Aorta (tissue), 5 donors: ENCODE measurements at regions of chr1 and their contacts with region 1.

Region 1: DNA sequence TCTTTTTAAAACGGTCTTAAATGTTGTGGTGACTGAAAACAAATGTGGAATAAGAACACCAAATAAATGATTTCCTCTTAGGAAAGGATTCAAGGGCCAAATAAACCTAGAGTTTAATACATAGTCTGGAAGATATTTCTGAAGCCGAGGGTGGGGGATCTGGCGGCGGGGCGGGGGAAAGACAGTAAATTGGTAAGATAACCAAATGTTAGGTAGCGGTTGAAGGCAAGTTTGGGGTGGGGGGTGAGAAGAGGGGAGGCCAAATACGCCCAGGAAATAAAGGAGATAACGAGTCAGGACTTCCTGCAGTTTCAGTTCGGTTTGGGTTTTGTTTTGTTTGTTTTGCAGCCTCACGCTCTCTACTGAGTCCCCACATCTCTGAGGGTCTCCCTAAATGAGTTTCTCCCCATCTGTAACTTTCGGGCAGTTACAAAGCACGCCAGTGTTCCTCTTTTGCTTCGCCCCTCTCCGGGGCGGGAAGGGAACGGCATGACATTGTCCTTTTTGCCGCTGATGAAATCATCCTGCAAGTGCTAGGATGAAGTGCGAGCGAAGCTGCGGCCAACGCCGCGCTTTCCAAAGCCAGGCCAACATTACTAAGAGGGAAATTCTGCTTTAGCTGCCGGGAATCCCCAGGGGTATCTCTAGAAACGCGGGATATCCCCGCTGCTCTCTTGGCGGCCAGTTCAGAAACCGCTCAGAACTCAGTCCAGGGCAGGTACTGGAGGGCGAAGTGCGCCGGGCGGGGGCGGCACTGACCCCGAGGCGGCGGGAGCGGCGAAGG is 844 bp downstream of the NIBAN1 start:
- DNase-seq: peak; percentile 77 to 82
- ATAC-seq: peak; percentile 59
- H3K4me3 ChIP-seq: peak overlapping the region; percentile 64 to 100
- H3K27ac ChIP-seq: peak overlapping the region; percentile 81 to 96
- H3K4me1 ChIP-seq: peaks cover 7 to 17% of the 10 kb centered on the region in 2 donors
- H3K27me3 ChIP-seq: no peaks in the 10 kb centered on the region

Region 2: GRCh38 chr1:184754476-184755225 is 218.8 kb before region 1 on chr1 and contains the start of gene EDEM3:
- intact Hi-C with region 1: loop called in 1 of 2 experiments (anchors 5 kb)
- DNase-seq: peak; percentile 98 to 99
- ATAC-seq: peak; percentile 99
- H3K4me3 ChIP-seq: peak within 1 kb of the TSS; percentile 78 to 91
- H3K27ac ChIP-seq: peak within 1 kb of the TSS in 1 of 2 donors; percentile 85
- H3K4me1 ChIP-seq: peaks cover 0 to 1% of the 10 kb centered on the region in 2 donors
- H3K27me3 ChIP-seq: no peaks in the 10 kb centered on the region
- total RNA-seq, gene EDEM3: 39.8 to 54.8 TPM

Region 3: DNA sequence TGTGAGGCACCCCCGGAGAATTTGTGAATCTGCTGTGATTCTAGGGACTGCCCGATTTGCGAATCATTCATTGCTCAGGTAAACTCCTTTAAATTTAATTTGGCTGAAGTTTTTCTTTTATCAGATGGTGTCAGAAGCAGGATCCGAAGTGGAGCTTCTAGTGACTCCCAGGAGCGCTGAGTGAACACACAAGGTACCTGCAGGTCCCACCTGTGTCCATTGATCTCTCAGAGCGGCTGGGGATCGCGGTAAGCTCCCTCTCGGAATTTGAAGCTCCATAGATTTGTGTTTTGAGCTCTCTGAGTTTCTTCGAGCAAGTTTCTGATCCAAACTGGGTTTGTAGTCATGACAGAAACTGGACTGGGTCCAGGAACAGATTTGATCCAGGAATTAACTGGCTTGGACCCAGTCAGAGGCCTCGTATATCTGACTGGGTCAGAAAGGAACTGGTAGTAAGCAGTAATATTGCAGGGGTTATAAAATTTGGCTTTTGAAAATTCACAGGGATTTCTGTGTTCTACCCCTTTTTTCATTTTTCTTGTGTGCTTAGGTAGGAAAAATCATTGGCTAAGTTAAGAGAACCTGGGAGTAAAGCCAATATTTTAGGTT is 162.6 kb before region 1 on chr1:
- intact Hi-C with region 1: loop called (anchors 2 kb)
- DNase-seq: no peak
- ATAC-seq: peak; percentile 55
- H3K4me3 ChIP-seq: no peak overlapping the region
- H3K27ac ChIP-seq: peak overlapping the region; percentile 87 to 94
- H3K4me1 ChIP-seq: peaks cover 0 to 5% of the 10 kb centered on the region in 2 donors
- H3K27me3 ChIP-seq: no peaks in the 10 kb centered on the region

Region 4: DNA sequence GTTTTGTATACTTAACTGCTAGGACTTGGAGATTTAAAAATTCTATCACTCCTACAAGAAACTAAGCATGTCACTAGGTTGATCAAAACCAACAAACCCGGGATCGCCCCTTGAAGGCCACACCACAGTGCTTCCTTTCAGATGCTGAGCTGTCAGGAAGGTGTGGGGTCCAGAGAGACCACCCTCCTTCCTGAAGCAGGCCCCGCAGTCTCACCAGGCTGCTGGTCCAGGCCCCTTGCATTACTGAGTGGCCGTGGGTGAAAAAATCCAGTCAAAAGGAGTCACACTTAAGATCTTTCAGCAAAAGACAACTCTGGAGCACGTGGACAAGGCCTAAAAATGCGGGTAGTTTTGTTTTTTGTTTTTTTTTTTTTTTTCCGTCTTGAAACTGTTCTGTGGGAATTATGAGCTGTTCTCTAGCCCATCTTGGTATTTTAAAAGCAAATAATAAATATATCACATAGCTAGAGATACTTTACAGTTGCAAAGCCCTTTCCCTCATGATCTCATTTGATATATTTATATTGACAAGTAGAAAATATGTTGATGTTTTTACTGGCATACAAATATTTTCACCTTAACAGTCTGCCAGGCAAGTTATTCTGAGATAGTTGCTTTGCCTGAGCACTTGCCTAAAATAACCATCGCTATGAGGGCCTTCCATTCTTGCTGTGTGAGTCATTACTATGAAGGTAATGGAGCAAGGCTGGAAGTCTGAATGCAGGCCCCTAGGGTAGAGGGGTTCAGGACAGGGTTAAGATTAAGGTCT is 145.7 kb before region 1 on chr1:
- intact Hi-C with region 1: loop called (anchors 5 kb)
- DNase-seq: no peak
- ATAC-seq: peak; percentile 83
- H3K4me3 ChIP-seq: no peak overlapping the region
- H3K27ac ChIP-seq: peak overlapping the region; percentile 97 to 98
- H3K4me1 ChIP-seq: peaks cover 8 to 12% of the 10 kb centered on the region in 2 donors
- H3K27me3 ChIP-seq: no peaks in the 10 kb centered on the region

Region 5: GRCh38 chr1:184881941-184882913 is 91.2 kb before region 1 on chr1:
- intact Hi-C with region 1: loop called (anchors 5 kb)
- DNase-seq: peak; percentile 78
- ATAC-seq: peak; percentile 88
- H3K4me3 ChIP-seq: no peak overlapping the region
- H3K27ac ChIP-seq: peak overlapping the region; percentile 97 to 99
- H3K4me1 ChIP-seq: peaks cover 6 to 9% of the 10 kb centered on the region in 2 donors
- H3K27me3 ChIP-seq: no peaks in the 10 kb centered on the region

Region 6: DNA sequence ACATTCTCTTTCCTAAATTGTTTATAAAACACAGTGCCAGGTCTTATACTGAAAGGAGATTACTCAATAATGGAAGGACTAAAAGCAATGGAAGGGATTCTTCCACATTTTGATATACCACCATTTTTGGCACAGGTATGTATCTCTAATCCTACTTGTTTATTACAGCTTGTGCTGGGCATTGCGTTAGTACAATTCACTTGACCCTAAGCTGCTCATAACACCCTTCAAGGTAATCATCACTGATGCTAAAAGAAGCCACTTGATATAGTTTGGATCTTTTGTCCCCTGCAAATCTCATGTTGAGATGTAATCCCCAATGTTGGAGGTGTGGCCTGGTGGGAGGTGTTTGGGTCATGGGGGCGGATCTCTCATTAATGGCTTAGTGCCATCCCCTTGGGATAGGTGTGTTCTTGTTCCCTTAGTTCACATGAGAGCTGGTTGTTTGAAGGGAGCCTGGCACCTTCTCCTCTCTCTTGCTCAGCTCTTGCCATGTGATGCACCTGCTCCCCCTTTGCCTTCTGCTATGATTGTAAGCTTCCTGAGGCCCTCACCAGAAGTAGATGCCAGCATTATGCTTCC is 70.3 kb before region 1 on chr1:
- intact Hi-C with region 1: no loop called
- DNase-seq: no peak
- ATAC-seq: no peak
- H3K4me3 ChIP-seq: no peak overlapping the region
- H3K27ac ChIP-seq: peak overlapping the region in 1 of 2 donors; percentile 81
- H3K4me1 ChIP-seq: peaks cover 10 to 25% of the 10 kb centered on the region in 2 donors
- H3K27me3 ChIP-seq: no peaks in the 10 kb centered on the region

Region 7: DNA sequence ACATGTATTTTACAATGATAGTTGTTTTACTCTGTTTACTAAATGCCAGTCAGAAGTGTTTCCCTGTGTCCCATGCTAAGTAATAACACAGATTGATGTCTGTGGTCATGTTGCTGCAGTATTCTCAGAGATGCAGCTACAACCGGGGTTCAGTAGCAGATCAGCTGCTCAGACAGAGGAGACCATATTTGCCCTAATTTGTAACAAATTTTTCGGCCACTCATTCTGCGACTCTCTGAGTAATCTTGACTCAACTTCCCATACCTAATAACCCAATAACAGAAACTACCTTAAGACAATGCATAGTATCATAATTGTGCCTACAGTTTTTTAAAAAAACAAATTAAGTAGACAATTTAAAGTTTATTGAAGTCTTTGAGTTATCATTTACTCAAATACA is 31.7 kb before region 1 on chr1:
- intact Hi-C with region 1: no loop called
- DNase-seq: no peak
- ATAC-seq: no peak
- H3K4me3 ChIP-seq: no peak overlapping the region
- H3K27ac ChIP-seq: no peak overlapping the region
- H3K4me1 ChIP-seq: peaks cover 8 to 13% of the 10 kb centered on the region in 2 donors
- H3K27me3 ChIP-seq: no peaks in the 10 kb centered on the region